ENCODE measurements at regions of chr3 and their contacts with region 1.

Region 1: DNA sequence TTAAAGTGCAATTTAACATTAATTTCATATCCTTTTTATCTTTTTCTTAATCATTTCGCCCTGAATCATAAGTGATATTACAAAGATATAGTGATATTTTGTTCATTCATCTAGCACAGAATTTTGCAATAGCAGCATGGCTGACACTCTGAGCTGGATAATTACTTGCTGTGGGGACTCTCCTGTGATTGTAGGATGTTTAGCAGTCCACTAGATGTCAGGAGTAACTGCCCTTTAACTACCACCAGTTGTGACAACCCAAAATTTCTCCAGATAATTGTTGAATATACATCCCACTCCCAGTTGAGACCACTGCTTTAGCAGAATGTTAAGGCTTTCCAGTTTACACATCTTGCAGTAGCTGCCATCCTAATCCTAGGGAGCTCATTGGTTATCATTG is 196.8 kb upstream of the MBNL1 start:
- DNase-seq: peak; percentile 69
- H3K4me3 Mint-ChIP-seq: no peak overlapping the region
- H3K27ac Mint-ChIP-seq: no peak overlapping the region
- H3K4me1 Mint-ChIP-seq: no peaks in the 10 kb centered on the region
- H3K27me3 Mint-ChIP-seq: no peaks in the 10 kb centered on the region
- CTCF ChIP-seq: peak; percentile 40

Region 2: DNA sequence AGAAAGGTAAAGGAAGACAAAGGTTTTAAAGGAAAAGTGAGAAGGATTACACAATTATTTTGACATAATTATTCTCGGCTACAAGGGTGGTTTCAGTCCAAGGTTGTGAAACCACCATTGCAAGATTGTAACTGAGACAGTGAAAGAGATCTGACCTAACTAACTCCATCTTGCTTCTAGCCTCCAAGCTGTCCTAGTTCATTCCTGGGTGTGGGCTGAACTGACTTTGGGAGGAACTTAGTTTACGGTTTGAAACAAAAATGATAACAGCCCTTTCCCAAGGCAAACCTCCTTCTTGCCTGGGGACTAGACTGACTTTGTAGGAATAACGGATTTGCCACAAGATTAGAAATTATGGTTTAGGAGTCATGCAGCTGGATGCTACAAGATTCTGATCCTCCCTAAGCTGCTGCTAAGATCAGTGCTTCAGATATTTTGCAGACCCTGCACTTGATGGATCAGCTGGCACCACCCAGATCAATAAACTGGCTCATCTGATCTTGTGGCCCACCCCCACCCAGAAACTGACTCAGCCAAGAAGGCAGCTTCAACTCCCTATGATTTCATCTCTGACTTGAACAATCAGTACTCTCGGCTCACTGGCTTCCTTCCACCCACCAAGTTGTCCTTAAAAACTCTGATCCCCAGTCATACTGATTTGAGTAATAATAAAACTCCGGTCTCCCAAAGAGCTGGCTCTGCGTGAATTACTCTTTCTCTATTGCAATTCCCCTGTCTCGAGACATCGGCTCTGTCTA is 395.9 kb before region 1 on chr3:
- CTCF ChIA-PET with region 1: no interaction called
- POLR2A ChIA-PET with region 1: no interaction called
- intact Hi-C with region 1: no loop called
- DNase-seq: peak; percentile 20
- H3K4me3 Mint-ChIP-seq: no peak overlapping the region
- H3K27ac Mint-ChIP-seq: no peak overlapping the region
- H3K4me1 Mint-ChIP-seq: no peaks in the 10 kb centered on the region
- H3K27me3 Mint-ChIP-seq: no peaks in the 10 kb centered on the region
- CTCF ChIP-seq: no peak

Region 3: DNA sequence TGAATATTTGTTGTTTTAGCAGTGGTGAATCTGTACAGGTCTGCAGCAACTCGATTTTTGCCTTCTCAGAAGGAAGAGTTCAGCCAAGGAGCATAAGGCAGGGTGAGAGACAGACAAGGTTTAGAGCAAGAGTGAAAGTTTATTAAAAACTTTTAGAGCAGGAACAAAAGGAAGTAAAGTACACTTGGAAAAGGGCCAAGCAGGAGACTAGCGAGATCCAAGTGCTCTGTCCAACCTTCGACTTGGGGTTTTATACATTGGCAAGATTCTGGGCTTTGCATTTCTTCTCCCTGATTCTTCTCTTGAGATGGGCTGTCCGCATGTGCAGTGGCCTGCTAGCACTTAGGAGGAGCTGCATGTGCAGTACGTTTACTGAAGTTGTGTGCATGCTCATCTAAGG is 384.8 kb before region 1 on chr3:
- CTCF ChIA-PET with region 1: no interaction called
- POLR2A ChIA-PET with region 1: no interaction called
- intact Hi-C with region 1: no loop called
- DNase-seq: no peak
- H3K4me3 Mint-ChIP-seq: no peak overlapping the region
- H3K27ac Mint-ChIP-seq: no peak overlapping the region
- H3K4me1 Mint-ChIP-seq: no peaks in the 10 kb centered on the region
- H3K27me3 Mint-ChIP-seq: no peaks in the 10 kb centered on the region
- CTCF ChIP-seq: no peak

Region 4: GRCh38 chr3:152444029-152444641 is 372.2 kb after region 1 on chr3:
- CTCF ChIA-PET with region 1: interaction called, 42 read pairs
- POLR2A ChIA-PET with region 1: interaction called, 3 read pairs
- intact Hi-C with region 1: loop called (anchors 1 kb)
- DNase-seq: peak; percentile 68
- H3K4me3 Mint-ChIP-seq: no peak overlapping the region
- H3K27ac Mint-ChIP-seq: no peak overlapping the region
- H3K4me1 Mint-ChIP-seq: peaks cover 18% of the 10 kb centered on the region
- H3K27me3 Mint-ChIP-seq: no peaks in the 10 kb centered on the region
- CTCF ChIP-seq: peak; percentile 56

Region 5: DNA sequence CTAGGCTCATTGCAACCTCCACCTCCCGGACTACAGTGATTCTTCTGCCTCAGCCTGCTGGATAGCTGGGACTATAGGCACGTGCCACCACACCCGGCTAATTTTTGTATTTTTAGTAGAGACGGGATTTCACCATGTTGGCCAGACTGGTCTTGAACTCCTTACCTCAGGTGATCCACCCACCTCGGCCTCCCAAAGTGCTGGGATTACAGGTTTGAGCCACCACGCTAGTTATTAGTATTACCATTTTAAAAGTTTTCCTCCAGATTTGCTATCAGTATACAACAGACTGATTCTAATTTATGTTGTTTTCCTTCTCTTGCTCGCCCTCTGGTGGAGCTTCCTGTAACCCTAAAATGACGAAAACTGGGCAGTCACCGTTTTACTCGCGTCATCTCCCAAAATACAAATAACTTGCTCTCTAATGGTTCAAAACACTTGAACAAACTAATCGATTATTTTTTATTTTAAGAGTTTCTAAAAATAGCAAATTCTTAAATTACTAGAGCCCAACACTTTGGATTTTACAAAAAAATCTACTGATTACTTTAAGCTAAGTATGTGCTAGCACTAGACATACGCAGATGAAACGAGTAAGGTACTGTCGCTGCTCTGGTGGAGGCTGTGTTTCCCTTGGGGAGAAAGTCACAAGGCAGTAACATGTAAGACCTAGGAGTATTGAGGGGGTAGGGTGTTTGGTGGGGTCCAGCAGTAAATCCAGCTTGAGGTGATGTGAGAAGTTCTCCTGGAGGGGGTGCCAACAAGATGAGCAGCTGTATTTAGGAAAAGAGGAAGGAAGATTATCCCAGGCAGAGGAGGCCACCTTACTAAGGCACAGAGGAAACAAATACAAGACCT is 400.1 kb after region 1 on chr3:
- CTCF ChIA-PET with region 1: interaction called, 3 read pairs
- POLR2A ChIA-PET with region 1: no interaction called
- intact Hi-C with region 1: loop called (anchors 1 kb)
- DNase-seq: peak; percentile 59
- H3K4me3 Mint-ChIP-seq: no peak overlapping the region
- H3K27ac Mint-ChIP-seq: no peak overlapping the region
- H3K4me1 Mint-ChIP-seq: no peaks in the 10 kb centered on the region
- H3K27me3 Mint-ChIP-seq: no peaks in the 10 kb centered on the region
- CTCF ChIP-seq: peak; percentile 42

Region 6: GRCh38 chr3:152574461-152575079 is 502.6 kb after region 1 on chr3:
- CTCF ChIA-PET with region 1: interaction called, 3 read pairs
- POLR2A ChIA-PET with region 1: no interaction called
- intact Hi-C with region 1: loop called (anchors 5 kb)
- DNase-seq: peak; percentile 69
- H3K4me3 Mint-ChIP-seq: no peak overlapping the region
- H3K27ac Mint-ChIP-seq: no peak overlapping the region
- H3K4me1 Mint-ChIP-seq: no peaks in the 10 kb centered on the region
- H3K27me3 Mint-ChIP-seq: no peaks in the 10 kb centered on the region
- CTCF ChIP-seq: peak; percentile 42

Measured in MCF 10A (cell line).